ENCODE measurements at regions of chr1 and their contacts with region 1.

Region 1: DNA sequence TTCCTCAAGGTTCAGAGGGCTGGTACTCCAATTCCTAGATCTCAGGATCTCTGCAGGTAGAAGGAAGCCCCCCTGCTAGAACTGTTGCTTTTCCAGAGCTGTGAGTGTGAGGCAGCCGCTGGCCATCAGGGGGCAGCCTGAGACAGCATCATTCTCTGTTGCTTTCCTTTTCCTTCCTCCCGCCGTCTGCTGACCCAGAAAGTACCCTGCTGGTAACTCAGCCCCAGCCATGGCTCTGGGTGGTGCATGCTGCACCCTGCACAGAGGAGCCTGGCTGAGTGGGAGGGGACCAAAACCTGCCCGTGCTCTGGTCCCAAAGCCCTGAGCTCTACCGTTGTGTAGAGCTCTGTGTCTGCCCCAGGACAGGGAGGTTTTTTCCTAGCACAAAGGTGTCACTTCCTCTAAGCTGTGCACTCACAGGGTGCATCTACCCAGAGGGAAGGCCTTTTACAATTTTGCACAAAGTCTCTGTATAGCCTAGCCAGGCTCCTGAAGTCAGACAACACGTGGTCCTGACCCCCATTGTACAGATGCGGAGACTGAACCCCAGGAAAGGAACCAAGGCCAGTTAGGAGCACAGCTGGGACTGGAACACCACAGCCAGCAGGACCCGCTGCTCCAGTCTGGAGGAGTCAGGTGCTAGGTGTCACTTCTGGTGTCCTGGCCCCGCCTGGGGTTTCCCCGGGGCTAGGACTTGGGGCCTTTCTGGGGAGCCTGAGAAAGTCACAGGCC is 5.6 kb upstream of the FAM131C start:
- DNase-seq: peak; percentile 72
- H3K4me3 ChIP-seq: peak overlapping the region; percentile 15
- H3K27ac ChIP-seq: peak overlapping the region; percentile 48
- H3K4me1 ChIP-seq: peaks cover 63% of the 10 kb centered on the region
- H3K27me3 ChIP-seq: no peaks in the 10 kb centered on the region
- CTCF ChIP-seq: peak; percentile 93

Region 2: DNA sequence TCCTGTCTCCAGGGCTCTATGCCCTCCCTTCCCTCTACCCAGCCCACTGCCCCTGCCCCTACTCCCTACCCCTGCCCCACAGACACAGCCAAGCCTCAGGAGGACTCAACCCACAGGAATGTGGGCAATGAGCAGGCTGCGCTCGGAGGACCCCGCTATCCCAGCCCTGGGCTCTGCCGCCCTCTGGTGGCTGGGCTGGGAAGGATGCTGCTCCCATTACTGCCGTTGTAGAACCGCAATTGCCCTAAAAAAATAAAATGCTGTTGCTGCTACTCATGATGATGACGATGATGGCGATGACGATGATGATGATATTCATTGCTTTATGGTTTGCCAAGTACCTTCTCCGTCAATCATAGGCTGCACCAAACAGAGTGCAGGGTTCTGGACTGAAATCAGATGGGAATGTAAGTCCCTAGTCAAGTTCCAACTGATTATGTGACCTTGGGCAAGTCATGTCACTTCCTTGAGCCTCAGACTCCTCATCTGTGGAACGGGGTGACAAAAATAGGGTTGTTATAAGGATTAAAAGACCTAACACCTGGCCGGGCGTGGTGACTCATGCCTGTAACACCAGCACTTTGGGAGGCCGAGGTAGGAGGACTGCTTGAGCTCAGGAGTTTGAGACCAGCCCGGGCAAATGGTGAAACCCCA is 108.8 kb after region 1 on chr1:
- intact Hi-C with region 1: loop called (anchors 2 kb)
- DNase-seq: peak; percentile 79
- H3K4me3 ChIP-seq: no peak overlapping the region
- H3K27ac ChIP-seq: no peak overlapping the region
- H3K4me1 ChIP-seq: peaks cover 41% of the 10 kb centered on the region
- H3K27me3 ChIP-seq: no peaks in the 10 kb centered on the region
- CTCF ChIP-seq: peak; percentile 96

Region 3: GRCh38 chr1:16243936-16244649 is 165.0 kb after region 1 on chr1:
- intact Hi-C with region 1: loop called (anchors 5 kb)
- DNase-seq: peak; percentile 71
- H3K4me3 ChIP-seq: no peak overlapping the region
- H3K27ac ChIP-seq: peak overlapping the region; percentile 90
- H3K4me1 ChIP-seq: peaks cover 50% of the 10 kb centered on the region
- H3K27me3 ChIP-seq: no peaks in the 10 kb centered on the region
- CTCF ChIP-seq: peak; percentile 87

Measured in left ventricle myocardium inferior (tissue), 1 donor.